Activated CD4-positive, alpha-beta memory T cell treated with anti-CD3 and anti-CD28 coated beads for 36 hours (primary cell): ENCODE measurements at regions of chr4 and their contacts with region 1.

Region 1: DNA sequence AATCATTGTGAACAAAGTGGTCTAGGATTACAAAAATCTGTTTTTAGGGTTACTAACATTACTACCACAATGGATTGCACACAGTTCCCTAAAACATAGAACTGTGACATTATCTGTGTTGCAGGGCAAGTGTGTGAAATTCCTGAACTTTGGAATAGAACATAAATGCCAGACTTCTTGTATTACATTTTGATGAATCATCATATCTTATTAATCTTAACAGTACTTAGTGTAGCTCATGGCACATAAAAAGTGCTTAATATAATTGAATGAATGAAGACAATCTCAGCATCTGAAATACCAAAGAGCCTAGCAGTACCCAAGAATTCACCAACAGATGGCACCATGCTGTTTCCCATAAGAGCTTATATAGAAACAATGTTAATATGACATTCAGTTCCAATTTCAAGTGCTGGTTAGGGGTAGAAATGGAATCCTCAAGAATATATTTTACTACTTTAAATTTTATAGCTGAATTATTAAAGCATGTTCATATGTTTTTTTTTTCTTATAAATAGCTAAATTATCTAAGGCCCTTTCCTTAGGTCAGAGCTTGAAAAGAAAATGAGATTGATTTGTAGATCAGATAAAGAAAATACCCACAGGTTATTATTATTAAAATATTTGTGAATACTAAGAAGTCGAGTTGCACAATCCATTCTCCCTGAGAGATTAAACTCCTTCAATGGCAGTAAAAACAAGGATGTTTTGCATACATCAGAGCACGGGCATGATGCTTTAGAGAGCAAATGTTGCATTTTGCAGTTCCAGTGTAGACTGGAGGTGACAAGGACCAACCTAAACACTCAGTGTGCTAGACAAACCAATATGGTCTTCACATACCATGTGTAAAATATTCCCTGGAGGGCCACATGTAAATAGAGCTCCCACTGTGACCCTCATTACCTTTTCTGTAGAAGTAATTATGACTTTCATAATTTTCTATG is 25.7 kb upstream of the SHISA3 start:
- DNase-seq: no peak
- H3K4me3 Mint-ChIP-seq: no peak overlapping the region
- H3K27ac Mint-ChIP-seq: no peak overlapping the region
- H3K4me1 Mint-ChIP-seq: no peaks in the 10 kb centered on the region
- H3K27me3 Mint-ChIP-seq: peaks cover 5% of the 10 kb centered on the region

Region 2: GRCh38 chr4:41839916-41840854 is 531.4 kb before region 1 on chr4:
- CTCF ChIA-PET with region 1: no interaction called
- POLR2A ChIA-PET with region 1: no interaction called
- intact Hi-C with region 1: no loop called
- DNase-seq: peak; percentile 29
- H3K4me3 Mint-ChIP-seq: no peak overlapping the region
- H3K27ac Mint-ChIP-seq: no peak overlapping the region
- H3K4me1 Mint-ChIP-seq: peaks cover 5% of the 10 kb centered on the region
- H3K27me3 Mint-ChIP-seq: peaks cover 12% of the 10 kb centered on the region

Region 3: GRCh38 chr4:42401171-42401570 is 29.6 kb after region 1 on chr4:
- CTCF ChIA-PET with region 1: no interaction called
- POLR2A ChIA-PET with region 1: no interaction called
- intact Hi-C with region 1: no loop called
- DNase-seq: no peak
- H3K4me3 Mint-ChIP-seq: no peak overlapping the region
- H3K27ac Mint-ChIP-seq: no peak overlapping the region
- H3K4me1 Mint-ChIP-seq: peaks cover 29% of the 10 kb centered on the region
- H3K27me3 Mint-ChIP-seq: peaks cover 56% of the 10 kb centered on the region

Region 4: DNA sequence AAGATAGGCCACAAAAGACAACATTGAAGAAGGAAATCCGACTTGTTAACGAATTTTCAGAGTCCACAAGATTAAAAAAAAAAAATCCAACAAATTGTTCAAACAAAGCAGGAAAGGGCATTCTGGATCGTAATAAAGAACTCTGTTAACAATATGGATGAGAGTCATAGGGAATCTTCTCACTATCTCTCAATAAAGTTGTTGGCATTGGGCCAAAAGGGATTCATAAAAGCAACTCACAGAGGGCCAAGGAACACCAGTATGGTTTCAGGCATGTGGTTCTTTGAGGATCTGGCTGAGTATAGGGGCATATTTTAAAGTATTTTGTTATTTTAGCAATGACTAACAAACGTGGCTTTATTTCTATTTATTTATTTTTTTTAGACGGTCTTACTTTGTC is 75.2 kb after region 1 on chr4:
- CTCF ChIA-PET with region 1: no interaction called
- POLR2A ChIA-PET with region 1: no interaction called
- intact Hi-C with region 1: no loop called
- DNase-seq: no peak
- H3K4me3 Mint-ChIP-seq: no peak overlapping the region
- H3K27ac Mint-ChIP-seq: no peak overlapping the region
- H3K4me1 Mint-ChIP-seq: no peaks in the 10 kb centered on the region
- H3K27me3 Mint-ChIP-seq: no peaks in the 10 kb centered on the region

Region 5: DNA sequence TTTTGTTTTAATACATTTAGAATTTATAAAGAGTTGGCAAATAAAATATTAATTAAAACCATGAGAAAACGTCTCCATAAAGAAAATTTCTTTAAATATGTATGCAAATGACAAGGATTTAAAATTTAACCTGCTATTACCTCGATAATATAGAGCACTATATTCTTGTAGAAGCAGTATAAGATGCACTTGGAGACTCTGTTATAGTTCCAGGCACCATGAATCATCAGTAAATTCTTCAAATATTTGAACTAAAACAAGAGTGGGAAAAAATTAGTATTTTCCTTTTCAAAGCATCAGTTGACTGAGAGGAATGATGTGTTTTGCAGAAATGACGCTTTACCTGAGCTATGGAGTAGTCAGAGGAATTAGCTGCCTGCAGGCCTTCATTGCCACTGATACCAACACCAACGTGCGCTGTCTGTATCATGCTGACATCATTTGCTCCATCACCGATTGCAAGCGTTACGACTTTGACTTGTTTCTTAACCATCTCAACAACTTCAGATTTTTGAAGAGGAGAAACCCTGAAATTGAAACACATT is 93.0 kb after region 1 on chr4:
- CTCF ChIA-PET with region 1: no interaction called
- POLR2A ChIA-PET with region 1: no interaction called
- intact Hi-C with region 1: no loop called
- DNase-seq: no peak
- H3K4me3 Mint-ChIP-seq: no peak overlapping the region
- H3K27ac Mint-ChIP-seq: no peak overlapping the region
- H3K4me1 Mint-ChIP-seq: no peaks in the 10 kb centered on the region
- H3K27me3 Mint-ChIP-seq: no peaks in the 10 kb centered on the region

Region 6: DNA sequence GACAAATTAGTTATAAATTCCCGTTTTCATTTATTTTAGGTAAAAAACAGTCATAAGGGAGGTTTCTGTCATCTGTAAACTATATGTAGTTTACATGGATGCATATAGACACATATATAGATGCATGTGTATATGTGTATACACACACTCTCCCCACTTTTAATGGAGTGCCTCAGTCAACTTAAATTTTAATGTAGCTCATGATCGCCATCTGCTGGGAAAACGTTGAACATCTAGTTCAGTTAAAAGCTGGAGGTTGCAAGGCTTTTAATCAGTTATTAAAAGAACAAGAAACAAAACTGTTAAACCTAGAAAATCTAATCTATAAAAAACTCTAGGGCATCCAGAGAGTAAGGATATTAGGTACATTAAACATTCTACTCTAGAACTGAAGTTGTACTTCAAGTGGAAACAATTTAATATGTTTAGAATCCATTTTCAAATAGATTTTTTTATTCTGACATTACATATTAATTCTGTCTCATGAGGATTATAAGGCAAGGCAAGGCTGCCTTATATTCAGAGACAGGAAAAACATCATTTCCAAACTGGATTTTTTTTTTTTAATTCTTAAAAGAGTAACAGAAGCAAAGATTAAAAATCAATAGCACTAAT is 148.3 kb after region 1 on chr4:
- CTCF ChIA-PET with region 1: interaction called, 36 read pairs
- POLR2A ChIA-PET with region 1: no interaction called
- intact Hi-C with region 1: loop called (anchors 1 kb)
- DNase-seq: peak; percentile 25
- H3K4me3 Mint-ChIP-seq: no peak overlapping the region
- H3K27ac Mint-ChIP-seq: no peak overlapping the region
- H3K4me1 Mint-ChIP-seq: no peaks in the 10 kb centered on the region
- H3K27me3 Mint-ChIP-seq: no peaks in the 10 kb centered on the region

Region 7: DNA sequence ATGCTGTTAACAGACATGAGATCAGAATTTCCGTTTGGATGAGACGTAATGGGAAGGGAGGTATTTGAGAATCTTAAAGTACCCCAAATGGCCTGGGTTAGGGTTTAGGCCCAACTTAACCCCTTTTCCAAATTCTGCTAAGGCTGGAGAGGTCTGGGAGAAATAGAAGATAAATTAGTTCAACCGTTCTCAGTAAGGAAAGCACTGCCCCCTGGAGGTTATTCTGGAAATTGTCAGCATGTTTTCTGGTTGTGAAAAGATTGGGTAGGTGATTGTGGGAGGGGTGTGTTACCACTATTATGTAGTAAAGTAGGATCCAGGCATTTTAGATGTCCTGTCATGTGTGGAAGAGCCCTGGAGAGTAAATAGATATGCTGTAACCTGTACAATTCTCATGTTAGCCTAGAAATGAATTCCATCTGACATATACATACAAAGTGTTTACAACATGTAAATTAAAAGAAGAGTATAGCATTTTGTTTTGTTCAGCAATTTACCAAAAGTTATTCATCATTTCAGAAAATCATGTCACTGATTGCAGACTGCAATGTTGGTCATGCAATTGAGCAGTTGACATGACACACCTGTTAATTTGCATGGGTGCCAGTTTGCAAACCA is 494.1 kb after region 1 on chr4:
- CTCF ChIA-PET with region 1: interaction called, 5 read pairs
- POLR2A ChIA-PET with region 1: no interaction called
- intact Hi-C with region 1: loop called (anchors 1 kb)
- DNase-seq: peak; percentile 43
- H3K4me3 Mint-ChIP-seq: no peak overlapping the region
- H3K27ac Mint-ChIP-seq: no peak overlapping the region
- H3K4me1 Mint-ChIP-seq: no peaks in the 10 kb centered on the region
- H3K27me3 Mint-ChIP-seq: peaks cover 21% of the 10 kb centered on the region